ENCODE measurements at regions of chr18 and their contacts with region 1.

Region 1: GRCh38 chr18:10560450-10561045 is 34.7 kb downstream of the NAPG start:
- DNase-seq: peak; percentile 54 to 67 (median 56)
- H3K4me3 ChIP-seq: peak overlapping the region; percentile 34 to 74 (median 36)
- H3K4me3 Mint-ChIP-seq: peak overlapping the region; percentile 49 to 83
- H3K27ac ChIP-seq: peak overlapping the region in 1 of 2 donors; percentile 61
- H3K27ac Mint-ChIP-seq: peak overlapping the region in 2 of 7 donors; percentile 50 to 55
- H3K4me1 ChIP-seq: peaks cover 8 to 12% of the 10 kb centered on the region in 2 donors
- H3K4me1 Mint-ChIP-seq: peaks cover 10% of the 10 kb centered on the region
- H3K27me3 ChIP-seq: no peaks in the 10 kb centered on the region
- H3K27me3 Mint-ChIP-seq: peaks cover 0 to 6% (median 3%) of the 10 kb centered on the region in 3 donors
- CTCF ChIP-seq: peak; percentile 86

Region 2: GRCh38 chr18:11034884-11035283 is 474.3 kb after region 1 on chr18:
- intact Hi-C with region 1: loop called in 1 of 2 experiments (anchors 10 kb)
- DNase-seq: peak in 1 of 3 donors; percentile 6
- H3K4me3 ChIP-seq: no peak overlapping the region
- H3K4me3 Mint-ChIP-seq: no peak overlapping the region
- H3K27ac ChIP-seq: no peak overlapping the region
- H3K27ac Mint-ChIP-seq: no peak overlapping the region
- H3K4me1 ChIP-seq: no peaks in the 10 kb centered on the region
- H3K4me1 Mint-ChIP-seq: peaks cover 10% of the 10 kb centered on the region
- H3K27me3 ChIP-seq: no peaks in the 10 kb centered on the region
- H3K27me3 Mint-ChIP-seq: peaks cover 0 to 4% (median 2%) of the 10 kb centered on the region in 3 donors
- CTCF ChIP-seq: no peak

Region 3: DNA sequence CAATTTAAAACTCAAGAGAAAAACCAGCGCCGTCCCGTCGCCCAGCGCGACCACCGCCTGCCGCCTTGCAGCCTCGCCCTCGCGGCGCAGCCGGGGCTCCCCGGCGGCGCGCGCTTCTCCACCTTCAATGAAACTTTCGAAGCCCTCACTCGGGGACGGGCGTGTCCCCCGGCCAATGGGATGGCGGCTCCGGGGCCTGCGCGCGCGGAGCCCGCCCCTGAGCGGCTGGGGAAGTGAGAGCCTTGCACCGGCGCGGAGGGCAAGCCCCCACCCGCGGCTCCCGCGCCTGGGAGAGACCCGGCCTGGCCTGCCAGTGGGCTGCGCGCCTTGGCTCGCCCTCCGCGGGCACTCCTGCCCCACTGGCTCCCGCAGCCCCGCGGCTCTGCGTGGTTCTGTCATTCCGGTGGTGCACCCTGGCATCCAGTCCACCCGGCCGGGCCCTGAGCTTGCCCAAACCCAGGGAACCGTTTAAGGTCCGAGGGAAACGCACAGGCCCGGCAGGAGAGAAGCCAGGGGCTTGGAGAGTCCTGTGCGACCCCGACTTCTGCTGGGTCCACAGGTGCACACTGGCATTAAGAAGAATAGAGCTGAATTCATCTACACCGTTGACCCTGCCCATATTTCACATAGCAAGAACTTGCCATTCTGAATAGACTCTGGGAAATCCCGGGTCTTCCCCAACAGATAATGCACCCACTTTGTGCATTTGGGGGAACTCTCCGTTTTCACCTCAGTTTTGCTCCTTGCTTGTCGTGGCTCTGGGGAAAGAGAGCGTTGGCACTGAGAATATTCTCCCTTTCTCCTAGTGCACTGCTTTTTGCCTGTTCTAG is 589.1 kb after region 1 on chr18 and contains the start of gene PIEZO2:
- intact Hi-C with region 1: loop called (anchors 5 kb)
- DNase-seq: peak; percentile 4 to 42 (median 9)
- H3K4me3 ChIP-seq: peak within 1 kb of the TSS in 1 of 3 experiments; percentile 61
- H3K4me3 Mint-ChIP-seq: peak within 1 kb of the TSS; percentile 57 to 87
- H3K27ac ChIP-seq: no peak within 1 kb of the TSS
- H3K27ac Mint-ChIP-seq: no peak within 1 kb of the TSS
- H3K4me1 ChIP-seq: peaks cover 3 to 17% of the 10 kb centered on the region in 2 donors
- H3K4me1 Mint-ChIP-seq: peaks cover 18% of the 10 kb centered on the region
- H3K27me3 ChIP-seq: peaks cover 28 to 54% of the 10 kb centered on the region in 2 donors
- H3K27me3 Mint-ChIP-seq: peaks cover 40 to 70% (median 50%) of the 10 kb centered on the region in 3 donors
- CTCF ChIP-seq: no peak
- polyA plus RNA-seq, gene PIEZO2: not detected

Region 4: GRCh38 chr18:11553098-11553940 is 992.8 kb after region 1 on chr18:
- intact Hi-C with region 1: loop called in 1 of 2 experiments (anchors 5 kb)
- DNase-seq: peak in 2 of 3 donors; percentile 10 to 31
- H3K4me3 ChIP-seq: no peak overlapping the region
- H3K4me3 Mint-ChIP-seq: no peak overlapping the region
- H3K27ac ChIP-seq: no peak overlapping the region
- H3K27ac Mint-ChIP-seq: no peak overlapping the region
- H3K4me1 ChIP-seq: no peaks in the 10 kb centered on the region
- H3K4me1 Mint-ChIP-seq: peaks cover 1% of the 10 kb centered on the region
- H3K27me3 ChIP-seq: no peaks in the 10 kb centered on the region
- H3K27me3 Mint-ChIP-seq: peaks cover 0 to 3% (median 3%) of the 10 kb centered on the region in 3 donors
- CTCF ChIP-seq: peak; percentile 94